B cell (primary cell): ENCODE measurements at regions of chr7 and their contacts with region 1.

Region 1: DNA sequence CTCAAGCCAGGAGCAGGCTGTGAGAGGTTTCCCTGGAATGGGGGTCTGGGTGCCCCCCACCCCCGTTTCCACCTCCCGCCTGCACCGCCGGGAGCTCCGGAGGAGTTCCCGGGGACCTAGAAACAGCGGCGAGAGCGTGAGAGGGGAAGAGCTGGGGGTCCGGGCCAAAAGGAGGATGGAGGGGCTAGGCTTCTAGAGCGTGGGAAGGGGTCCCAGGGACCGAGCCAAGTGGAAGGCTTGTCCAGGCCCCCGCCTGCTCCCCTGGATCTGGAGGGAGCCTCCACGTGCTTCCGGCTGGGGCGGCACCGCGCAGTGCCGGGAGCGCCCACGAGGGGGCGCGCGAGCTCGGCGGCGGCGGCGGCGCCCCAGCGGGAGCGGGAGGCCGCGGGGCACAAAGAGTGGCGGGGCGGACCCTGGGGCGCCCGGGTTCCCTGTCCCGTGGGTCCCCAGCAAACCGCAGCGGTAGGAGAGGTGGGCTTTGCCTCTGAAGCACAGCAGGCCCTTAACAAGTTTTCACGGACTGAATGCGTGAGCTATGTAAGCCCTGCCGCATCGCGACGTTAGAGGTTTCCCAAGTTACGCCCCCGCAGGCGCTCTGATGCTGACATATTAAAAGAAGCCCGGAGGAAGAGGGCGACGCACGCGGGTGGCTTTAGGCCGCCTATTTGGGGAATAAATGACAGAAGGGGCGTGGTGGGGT is 104.4 kb upstream of the LRRC4 start:
- DNase-seq: peak; percentile 79
- ATAC-seq: peak; percentile 96
- H3K4me3 ChIP-seq: peak overlapping the region; percentile 21 to 70 (median 65)
- H3K4me3 Mint-ChIP-seq: peak overlapping the region; percentile 84
- H3K27ac ChIP-seq: no peak overlapping the region
- H3K27ac Mint-ChIP-seq: no peak overlapping the region
- H3K4me1 ChIP-seq: peaks cover 17 to 22% of the 10 kb centered on the region in 2 donors
- H3K4me1 Mint-ChIP-seq: peaks cover 16% of the 10 kb centered on the region
- H3K27me3 ChIP-seq: peaks cover 0 to 38% (median 17%) of the 10 kb centered on the region in 4 experiments
- H3K27me3 Mint-ChIP-seq: peaks cover 35% of the 10 kb centered on the region
- CTCF ChIP-seq: peak; percentile 96

Region 2: DNA sequence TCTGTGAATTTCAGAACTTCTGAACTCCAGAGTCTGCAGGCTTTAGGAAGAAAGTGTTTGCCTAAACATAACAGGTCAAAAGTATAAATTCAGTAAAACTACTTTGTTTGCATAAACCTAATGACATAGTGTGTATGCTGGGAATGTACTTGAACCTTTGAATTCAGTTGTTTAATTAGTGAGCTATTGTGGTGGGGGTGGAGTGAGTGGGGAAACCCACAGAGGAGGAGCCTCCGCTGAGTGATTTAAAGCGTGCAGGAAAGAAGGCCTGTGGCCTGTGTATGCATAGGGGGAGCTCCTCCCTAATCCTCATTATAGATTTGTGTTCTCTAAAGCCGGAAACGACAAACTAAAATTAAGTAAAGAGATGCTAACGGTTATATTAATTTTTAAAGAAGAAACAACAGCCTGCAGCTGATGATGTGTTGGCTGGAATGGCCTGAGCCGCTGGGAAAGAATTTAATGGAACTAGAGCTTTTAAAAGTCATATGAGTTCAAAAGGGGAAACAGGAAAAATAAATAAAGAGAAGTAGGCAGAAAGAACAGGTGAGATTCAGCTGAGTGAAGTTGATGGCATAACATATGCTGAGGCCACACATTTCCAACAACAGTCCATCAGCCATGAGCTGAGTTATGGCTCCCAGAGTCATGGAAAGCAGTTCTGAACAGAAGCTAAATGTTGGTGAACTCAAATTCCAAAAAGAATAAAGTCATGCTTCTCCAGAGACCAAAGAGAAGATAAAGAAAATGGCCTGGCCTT is 1477.9 kb before region 1 on chr7:
- CTCF ChIA-PET with region 1: no interaction called
- POLR2A ChIA-PET with region 1: no interaction called
- intact Hi-C with region 1: no loop called
- DNase-seq: peak; percentile 40
- ATAC-seq: peak; percentile 69
- H3K4me3 ChIP-seq: no peak overlapping the region
- H3K4me3 Mint-ChIP-seq: peak overlapping the region; percentile 15
- H3K27ac ChIP-seq: peak overlapping the region; percentile 66 to 67
- H3K27ac Mint-ChIP-seq: peak overlapping the region; percentile 72
- H3K4me1 ChIP-seq: peaks cover 0 to 13% of the 10 kb centered on the region in 2 donors
- H3K4me1 Mint-ChIP-seq: peaks cover 22% of the 10 kb centered on the region
- H3K27me3 ChIP-seq: no peaks in the 10 kb centered on the region
- H3K27me3 Mint-ChIP-seq: no peaks in the 10 kb centered on the region
- CTCF ChIP-seq: no peak

Region 3: DNA sequence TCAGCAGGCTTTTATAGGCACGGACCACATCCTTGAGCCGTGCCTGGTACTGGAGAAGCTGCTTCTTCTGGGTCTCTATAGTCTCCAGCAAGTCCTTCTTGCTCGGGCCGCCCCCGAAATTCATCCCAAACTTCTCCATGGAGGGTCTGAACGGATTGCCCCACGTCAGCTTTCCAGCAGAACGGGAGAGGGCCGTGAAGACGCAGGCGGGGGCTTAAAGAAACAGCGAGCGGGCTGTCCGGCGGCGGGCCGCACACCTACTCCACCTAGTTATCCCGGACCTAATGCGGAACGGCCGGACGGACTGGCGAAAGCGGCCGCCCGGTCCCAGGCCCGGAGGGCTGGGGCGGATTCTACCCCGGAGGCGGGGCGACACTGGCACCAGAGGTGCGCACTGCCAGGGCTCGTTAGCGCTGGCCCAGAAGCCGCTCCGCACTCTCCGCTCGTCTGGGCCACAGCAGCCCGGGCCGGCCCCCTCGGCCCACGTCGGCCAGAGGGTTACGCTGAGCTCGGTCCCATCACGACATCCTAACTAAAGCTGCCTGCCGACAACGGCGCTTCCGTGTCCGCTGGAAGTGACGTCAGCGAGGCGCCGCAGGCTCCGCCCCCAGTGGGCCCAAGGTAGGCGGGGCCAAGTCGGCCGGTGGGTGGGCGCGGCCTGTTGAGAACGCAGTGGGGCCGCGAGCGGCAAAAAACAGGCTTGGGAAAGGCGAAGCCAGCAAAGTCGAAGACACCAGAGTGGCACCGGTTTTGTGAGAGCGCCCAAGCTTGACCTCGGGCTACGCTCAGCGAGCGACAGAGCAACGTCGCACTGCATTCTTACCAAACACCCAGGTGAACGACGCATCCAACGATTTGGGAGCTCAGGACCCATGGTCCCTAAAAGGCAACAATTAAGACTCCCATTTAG is 550.4 kb before region 1 on chr7 and contains the start of gene GCC1:
- CTCF ChIA-PET with region 1: no interaction called
- POLR2A ChIA-PET with region 1: no interaction called
- intact Hi-C with region 1: no loop called
- DNase-seq: peak; percentile 95
- ATAC-seq: peak; percentile 80
- H3K4me3 ChIP-seq: peak within 1 kb of the TSS; percentile 84 to 97 (median 95)
- H3K4me3 Mint-ChIP-seq: peak within 1 kb of the TSS; percentile 89
- H3K27ac ChIP-seq: peak within 1 kb of the TSS; percentile 55 to 89
- H3K27ac Mint-ChIP-seq: peak within 1 kb of the TSS; percentile 89
- H3K4me1 ChIP-seq: peaks cover 45 to 54% of the 10 kb centered on the region in 2 donors
- H3K4me1 Mint-ChIP-seq: peaks cover 73% of the 10 kb centered on the region
- H3K27me3 ChIP-seq: no peaks in the 10 kb centered on the region
- H3K27me3 Mint-ChIP-seq: no peaks in the 10 kb centered on the region
- CTCF ChIP-seq: no peak
- total RNA-seq, gene GCC1: 25.5 and 26.4 TPM in 2 replicates

Region 4: DNA sequence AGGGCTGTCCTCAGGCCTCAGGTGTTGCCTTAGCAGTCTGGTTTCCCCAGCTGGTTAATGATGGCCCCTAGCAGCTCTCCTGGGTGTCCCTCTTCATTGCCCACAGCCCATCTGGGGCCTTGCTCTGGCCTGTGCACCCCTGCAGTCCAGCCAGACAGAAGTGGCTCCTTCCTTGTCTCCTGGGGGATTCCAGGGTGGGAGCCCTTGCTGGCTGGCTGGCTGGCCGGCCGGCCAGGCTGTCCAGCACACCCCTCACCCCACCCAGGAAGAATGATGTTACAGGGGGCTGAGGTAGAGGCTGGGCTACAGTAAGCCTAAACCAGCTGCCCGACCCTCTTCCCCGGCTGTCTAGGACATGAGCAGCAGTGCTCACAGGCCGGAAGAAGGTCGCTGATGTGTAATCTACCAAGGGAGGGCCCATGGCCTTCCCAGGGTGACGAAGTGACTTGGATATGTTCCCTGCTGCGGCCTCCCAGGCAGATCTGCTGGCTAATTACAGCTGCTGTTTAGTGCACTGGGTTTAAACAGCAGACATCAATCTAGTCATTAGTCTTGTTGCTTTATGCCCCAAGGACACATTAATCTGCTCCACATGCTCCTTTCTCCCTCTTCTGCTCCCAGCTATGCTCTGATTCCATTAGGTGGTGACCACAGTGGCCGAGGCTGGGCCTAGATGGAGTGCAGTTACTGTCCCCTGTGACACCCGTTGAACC is 50.6 kb before region 1 on chr7:
- CTCF ChIA-PET with region 1: interaction called, 10 read pairs
- POLR2A ChIA-PET with region 1: no interaction called
- intact Hi-C with region 1: no loop called
- DNase-seq: no peak
- ATAC-seq: no peak
- H3K4me3 ChIP-seq: no peak overlapping the region
- H3K4me3 Mint-ChIP-seq: no peak overlapping the region
- H3K27ac ChIP-seq: no peak overlapping the region
- H3K27ac Mint-ChIP-seq: no peak overlapping the region
- H3K4me1 ChIP-seq: no peaks in the 10 kb centered on the region
- H3K4me1 Mint-ChIP-seq: no peaks in the 10 kb centered on the region
- H3K27me3 ChIP-seq: no peaks in the 10 kb centered on the region
- H3K27me3 Mint-ChIP-seq: no peaks in the 10 kb centered on the region
- CTCF ChIP-seq: no peak

Region 5: DNA sequence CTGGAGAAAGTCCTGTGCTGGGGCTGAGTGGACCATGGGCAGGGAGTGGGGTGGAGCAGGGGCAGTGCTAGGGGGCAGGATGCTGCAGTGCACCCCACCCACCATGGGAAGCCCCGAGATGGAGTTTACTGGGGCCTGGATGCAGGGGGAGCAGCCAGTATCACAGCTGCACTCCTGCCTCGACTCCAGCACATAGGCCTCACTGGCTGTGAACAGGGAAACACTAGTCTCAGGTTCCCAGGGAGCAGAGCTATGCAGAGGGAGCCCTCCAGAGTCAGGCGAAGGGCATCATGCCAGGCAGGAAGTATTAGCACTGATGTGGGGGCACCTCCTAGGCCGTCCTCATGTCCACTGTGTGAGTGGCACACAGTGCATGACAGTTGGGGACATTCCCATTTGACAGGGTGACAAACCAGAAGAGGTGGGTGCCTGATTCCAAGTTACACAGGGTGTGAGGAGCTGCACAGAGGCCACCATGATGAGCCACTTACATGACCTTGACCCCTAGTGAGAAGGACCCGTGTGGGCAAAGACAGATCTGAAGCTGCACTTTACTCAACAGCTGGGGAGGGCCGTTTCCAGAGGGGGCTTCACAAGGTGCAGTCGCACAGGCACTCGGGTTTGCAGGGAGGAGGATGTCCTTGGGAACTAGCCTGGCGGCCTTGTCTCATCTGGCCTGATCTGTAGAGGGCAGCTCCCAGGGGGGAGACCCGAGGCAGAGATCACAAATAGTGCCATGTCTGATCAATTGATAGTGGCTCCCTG is 34.5 kb before region 1 on chr7:
- CTCF ChIA-PET with region 1: interaction called, 24 read pairs
- POLR2A ChIA-PET with region 1: no interaction called
- intact Hi-C with region 1: no loop called
- DNase-seq: no peak
- ATAC-seq: no peak
- H3K4me3 ChIP-seq: no peak overlapping the region
- H3K4me3 Mint-ChIP-seq: no peak overlapping the region
- H3K27ac ChIP-seq: peak overlapping the region; percentile 6 to 19
- H3K27ac Mint-ChIP-seq: peak overlapping the region; percentile 10
- H3K4me1 ChIP-seq: peaks cover 16 to 39% of the 10 kb centered on the region in 2 donors
- H3K4me1 Mint-ChIP-seq: peaks cover 42% of the 10 kb centered on the region
- H3K27me3 ChIP-seq: no peaks in the 10 kb centered on the region
- H3K27me3 Mint-ChIP-seq: no peaks in the 10 kb centered on the region
- CTCF ChIP-seq: no peak

Region 6: DNA sequence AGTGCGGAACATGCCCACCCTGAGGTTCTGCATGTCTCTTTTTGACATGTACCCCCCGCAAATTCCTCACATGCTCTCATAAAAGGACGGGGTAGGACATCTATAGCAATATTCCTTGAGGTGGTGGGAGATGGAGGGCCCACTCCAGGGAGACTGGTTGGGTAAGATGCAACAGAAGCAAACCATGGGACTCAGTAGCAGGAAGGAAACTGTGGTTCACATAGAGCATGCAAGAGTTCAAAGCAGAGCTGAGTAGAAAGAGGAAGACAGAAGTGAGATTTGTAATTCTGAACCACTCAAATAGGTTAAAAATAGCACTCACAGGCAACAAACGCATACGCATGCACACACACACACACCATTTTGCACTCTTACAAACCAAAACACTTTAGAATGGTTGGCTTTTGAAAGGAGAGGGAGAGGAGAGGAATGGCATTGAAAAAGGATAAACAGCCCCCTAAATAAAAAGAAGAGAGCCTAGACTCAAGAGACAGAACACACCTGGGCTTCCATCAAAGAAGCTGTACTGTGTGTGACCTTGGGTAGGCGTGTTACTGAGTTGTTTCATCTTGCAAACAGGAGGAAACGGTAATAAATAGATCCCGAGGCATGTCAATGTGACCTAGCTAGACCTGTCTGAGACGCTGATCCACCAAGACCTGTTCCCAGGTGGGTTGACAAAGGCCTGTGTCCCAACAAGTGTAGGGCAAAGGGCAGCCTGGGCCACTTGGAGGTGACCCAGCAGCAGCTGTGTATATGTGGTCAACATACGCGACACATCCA is 26.8 kb before region 1 on chr7:
- CTCF ChIA-PET with region 1: interaction called, 24 read pairs
- POLR2A ChIA-PET with region 1: no interaction called
- intact Hi-C with region 1: loop called (anchors 2 kb)
- DNase-seq: peak; percentile 75
- ATAC-seq: peak; percentile 69
- H3K4me3 ChIP-seq: peak overlapping the region in 4 of 5 experiments; percentile 8 to 27 (median 12)
- H3K4me3 Mint-ChIP-seq: peak overlapping the region; percentile 77
- H3K27ac ChIP-seq: peak overlapping the region; percentile 78 to 89
- H3K27ac Mint-ChIP-seq: peak overlapping the region; percentile 90
- H3K4me1 ChIP-seq: peaks cover 78 to 89% of the 10 kb centered on the region in 2 donors
- H3K4me1 Mint-ChIP-seq: peaks cover 79% of the 10 kb centered on the region
- H3K27me3 ChIP-seq: no peaks in the 10 kb centered on the region
- H3K27me3 Mint-ChIP-seq: no peaks in the 10 kb centered on the region
- CTCF ChIP-seq: no peak

Region 7: GRCh38 chr7:128115391-128116332 is 20.0 kb before region 1 on chr7:
- CTCF ChIA-PET with region 1: interaction called, 16 read pairs
- POLR2A ChIA-PET with region 1: no interaction called
- intact Hi-C with region 1: no loop called
- DNase-seq: no peak
- ATAC-seq: no peak
- H3K4me3 ChIP-seq: no peak overlapping the region
- H3K4me3 Mint-ChIP-seq: no peak overlapping the region
- H3K27ac ChIP-seq: no peak overlapping the region
- H3K27ac Mint-ChIP-seq: no peak overlapping the region
- H3K4me1 ChIP-seq: peaks cover 40 to 46% of the 10 kb centered on the region in 2 donors
- H3K4me1 Mint-ChIP-seq: peaks cover 55% of the 10 kb centered on the region
- H3K27me3 ChIP-seq: no peaks in the 10 kb centered on the region
- H3K27me3 Mint-ChIP-seq: no peaks in the 10 kb centered on the region
- CTCF ChIP-seq: no peak

Region 8: GRCh38 chr7:128122576-128123290 is 12.9 kb before region 1 on chr7:
- CTCF ChIA-PET with region 1: interaction called, 20 read pairs
- POLR2A ChIA-PET with region 1: no interaction called
- intact Hi-C with region 1: no loop called
- DNase-seq: no peak
- ATAC-seq: no peak
- H3K4me3 ChIP-seq: no peak overlapping the region
- H3K4me3 Mint-ChIP-seq: no peak overlapping the region
- H3K27ac ChIP-seq: no peak overlapping the region
- H3K27ac Mint-ChIP-seq: no peak overlapping the region
- H3K4me1 ChIP-seq: peaks cover 13% of the 10 kb centered on the region in 2 donors
- H3K4me1 Mint-ChIP-seq: peaks cover 18% of the 10 kb centered on the region
- H3K27me3 ChIP-seq: no peaks in the 10 kb centered on the region
- H3K27me3 Mint-ChIP-seq: no peaks in the 10 kb centered on the region
- CTCF ChIP-seq: no peak

Region 9: DNA sequence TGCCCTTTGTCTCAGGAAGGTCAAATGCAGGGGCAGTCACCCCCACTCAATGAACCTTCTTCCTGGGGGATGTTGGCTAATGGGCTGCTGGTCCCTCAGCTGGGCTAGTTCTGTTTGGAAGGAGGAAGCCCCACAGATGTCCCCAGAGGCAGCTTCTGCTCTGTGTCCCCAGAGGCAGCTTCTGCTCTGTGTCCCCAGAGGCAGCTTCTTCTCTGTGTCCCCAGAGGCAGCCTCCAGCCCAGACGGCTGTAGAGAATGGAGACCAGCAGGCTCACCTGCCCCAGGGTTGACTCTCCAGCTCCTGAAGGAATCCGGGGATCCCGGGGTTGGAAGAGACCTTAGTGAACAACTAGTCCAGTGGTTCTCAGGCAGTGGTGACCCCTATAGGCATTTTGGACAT is 42.9 kb after region 1 on chr7:
- CTCF ChIA-PET with region 1: interaction called, 14 read pairs
- POLR2A ChIA-PET with region 1: no interaction called
- intact Hi-C with region 1: loop called (anchors 1 kb)
- DNase-seq: peak; percentile 70
- ATAC-seq: peak; percentile 100
- H3K4me3 ChIP-seq: no peak overlapping the region
- H3K4me3 Mint-ChIP-seq: peak overlapping the region; percentile 44
- H3K27ac ChIP-seq: no peak overlapping the region
- H3K27ac Mint-ChIP-seq: peak overlapping the region; percentile 72
- H3K4me1 ChIP-seq: peaks cover 29 to 35% of the 10 kb centered on the region in 2 donors
- H3K4me1 Mint-ChIP-seq: peaks cover 45% of the 10 kb centered on the region
- H3K27me3 ChIP-seq: peaks cover 0 to 18% (median 4%) of the 10 kb centered on the region in 4 experiments
- H3K27me3 Mint-ChIP-seq: peaks cover 47% of the 10 kb centered on the region
- CTCF ChIP-seq: no peak